ENCODE measurements at regions of chr3 and their contacts with region 1.

Region 1: GRCh38 chr3:120227710-120228347 is 57.2 kb downstream of the GPR156 start:
- ATAC-seq: no peak
- H3K4me3 ChIP-seq: no peak overlapping the region
- H3K27ac ChIP-seq: no peak overlapping the region
- H3K4me1 ChIP-seq: no peaks in the 10 kb centered on the region

Region 2: GRCh38 chr3:120417272-120417911 is 189.6 kb after region 1 on chr3:
- in situ Hi-C with region 1: loop called in 2 of 9 experiments (anchors 25 kb)
- ATAC-seq: peak; percentile 85 to 97 (median 94)
- H3K4me3 ChIP-seq: peak overlapping the region; percentile 17 to 37 (median 22)
- H3K27ac ChIP-seq: peak overlapping the region in 1 of 2 donors; percentile 14
- H3K4me1 ChIP-seq: peaks cover 9 to 25% of the 10 kb centered on the region in 2 donors

Region 3: GRCh38 chr3:120526011-120526870 is 298.4 kb after region 1 on chr3:
- in situ Hi-C with region 1: loop called in 1 of 9 experiments (anchors 25 kb)
- ATAC-seq: no peak
- H3K4me3 ChIP-seq: no peak overlapping the region
- H3K27ac ChIP-seq: no peak overlapping the region
- H3K4me1 ChIP-seq: no peaks in the 10 kb centered on the region

Region 4: DNA sequence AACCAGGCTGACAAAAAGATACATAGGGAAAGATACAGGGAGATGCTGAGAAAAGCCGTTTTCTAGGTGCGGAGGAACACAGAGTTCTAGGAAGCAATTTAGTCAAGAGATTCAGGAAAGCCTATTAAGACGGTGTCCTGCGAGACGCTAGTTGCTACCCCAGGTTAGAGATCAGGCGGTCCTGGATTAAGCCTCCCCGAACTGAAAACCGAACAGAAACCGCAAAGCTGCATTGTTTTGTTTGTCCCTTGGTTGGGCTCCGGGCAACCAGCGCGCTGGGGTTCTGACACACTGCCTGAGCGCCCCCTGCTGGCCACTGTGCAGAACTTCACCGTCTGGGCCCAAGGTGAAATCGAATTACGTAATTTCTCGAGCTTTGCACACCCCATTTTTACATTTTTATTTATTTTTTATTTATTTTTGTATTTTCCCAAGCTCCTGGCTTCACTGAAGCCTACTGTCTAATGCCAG is 331.0 kb after region 1 on chr3:
- in situ Hi-C with region 1: loop called in 3 of 9 experiments (anchors 25 kb)
- ATAC-seq: peak; percentile 62 to 87 (median 73)
- H3K4me3 ChIP-seq: peak overlapping the region; percentile 24 to 40 (median 35)
- H3K27ac ChIP-seq: peak overlapping the region; percentile 76 to 82
- H3K4me1 ChIP-seq: peaks cover 24 to 35% of the 10 kb centered on the region in 2 donors